Heart left ventricle (tissue), 16 donors: ENCODE measurements at regions of chr7 and their contacts with region 1.

Region 1: DNA sequence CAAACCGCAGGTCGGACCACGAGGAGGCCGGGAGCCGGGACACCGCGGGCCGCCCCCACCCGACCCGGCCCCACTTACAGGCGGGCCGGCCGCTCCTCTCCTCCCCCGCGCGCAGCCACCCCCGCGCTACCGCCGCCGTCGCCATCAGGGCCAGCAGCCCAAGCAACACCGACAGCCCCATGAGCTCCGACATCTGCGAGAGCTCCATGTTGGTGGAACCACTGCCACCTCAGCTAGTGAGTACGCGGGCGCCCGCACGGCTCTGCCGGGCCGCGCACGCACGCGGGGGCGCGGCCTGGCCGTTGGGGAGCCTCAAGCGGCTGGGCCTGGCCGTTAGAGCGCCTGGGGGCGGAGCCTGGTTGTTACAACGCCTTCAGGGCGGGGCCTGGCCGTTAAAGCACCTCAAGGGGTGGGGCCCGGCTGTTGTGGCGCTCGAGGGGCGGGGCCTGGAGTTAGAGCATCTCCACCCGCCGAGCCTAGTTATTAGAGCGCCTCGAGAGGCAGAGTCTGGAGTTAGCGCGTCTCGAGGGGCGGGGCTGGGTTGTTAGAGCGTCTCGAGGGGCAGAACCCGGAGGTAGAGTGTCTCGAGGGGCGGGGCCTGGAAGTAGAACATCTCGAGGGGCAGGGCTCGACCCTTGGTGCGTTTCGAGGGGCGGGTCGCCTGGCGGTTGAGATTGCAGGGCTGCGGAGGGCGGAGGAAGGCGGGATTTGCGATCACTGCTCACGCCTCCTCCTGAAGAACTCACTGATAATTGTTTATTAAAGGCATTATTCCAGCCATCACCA is at the start of gene TBL2:
- DNase-seq: peak; percentile 98 to 99 (median 99)
- ATAC-seq: peak; percentile 97 to 99 (median 98)
- H3K4me3 ChIP-seq: peak within 1 kb of the TSS; percentile 42 to 98 (median 95)
- H3K27ac ChIP-seq: peak within 1 kb of the TSS; percentile 58 to 96 (median 86)
- H3K4me1 ChIP-seq: peaks cover 0 to 59% (median 17%) of the 10 kb centered on the region in 12 donors
- H3K27me3 ChIP-seq: no peaks in the 10 kb centered on the region
- CTCF ChIP-seq: peak in 4 of 12 donors; percentile 29 to 50 (median 38)
- POLR2A ChIP-seq: peak in 1 of 2 donors; percentile 91
- total RNA-seq, gene TBL2: 6.8 to 24.1 (median 14.1) TPM

Region 2: DNA sequence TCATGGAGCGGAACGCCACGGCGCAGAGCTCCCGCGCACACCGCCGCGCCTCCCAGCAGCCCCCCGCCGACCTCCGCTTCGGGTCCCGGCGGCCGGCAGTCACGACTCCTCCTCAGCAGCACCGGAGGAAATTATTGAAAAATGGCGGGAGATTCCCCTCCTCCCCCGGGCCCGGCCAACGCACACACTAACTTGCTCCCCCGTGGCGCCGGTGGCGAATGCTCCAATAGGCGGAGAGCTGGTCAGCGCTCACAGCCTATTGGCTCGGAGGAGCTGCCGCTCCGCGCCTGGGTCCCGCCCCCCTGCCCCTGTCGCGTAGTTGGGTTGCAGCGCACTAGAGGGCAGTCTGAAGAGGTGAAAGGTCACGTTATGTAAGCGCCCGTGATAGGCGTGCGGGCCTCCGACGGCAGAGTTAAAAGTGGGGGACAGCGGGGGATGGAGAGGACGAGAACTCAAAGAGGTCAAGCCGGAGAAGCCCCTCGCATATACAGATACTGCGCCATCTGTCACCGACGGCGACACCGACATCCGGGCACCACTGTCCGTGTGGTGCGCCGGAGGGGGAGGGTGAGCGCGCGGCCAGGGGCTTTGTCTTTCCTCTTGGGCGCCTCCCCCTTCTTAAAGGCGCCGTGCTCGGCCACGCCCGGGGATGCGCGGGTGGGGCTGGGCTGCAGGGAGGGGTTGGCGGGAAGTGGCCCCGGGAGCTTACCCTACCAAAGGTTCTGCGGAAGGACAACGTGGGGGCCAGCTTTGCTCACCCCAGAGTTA is 56.2 kb before region 1 on chr7 and contains the start of gene BAZ1B:
- intact Hi-C with region 1: loop called in 2 of 10 experiments (anchors 1 to 10 kb)
- DNase-seq: peak; percentile 99
- ATAC-seq: peak; percentile 98 to 99 (median 98)
- H3K4me3 ChIP-seq: peak within 1 kb of the TSS; percentile 59 to 99 (median 90)
- H3K27ac ChIP-seq: peak within 1 kb of the TSS; percentile 81 to 97 (median 94)
- H3K4me1 ChIP-seq: peaks cover 11 to 64% (median 36%) of the 10 kb centered on the region in 12 donors
- H3K27me3 ChIP-seq: no peaks in the 10 kb centered on the region
- CTCF ChIP-seq: peak in 7 of 12 donors; percentile 6 to 47 (median 20)
- POLR2A ChIP-seq: peak; percentile 32 to 75
- total RNA-seq, gene BAZ1B: 30.1 to 45.0 (median 41.5) TPM

Region 3: GRCh38 chr7:73544678-73545077 is 33.9 kb before region 1 on chr7:
- intact Hi-C with region 1: loop called in 1 of 10 experiments (anchors 1 kb)
- DNase-seq: no peak
- ATAC-seq: no peak
- H3K4me3 ChIP-seq: no peak overlapping the region
- H3K27ac ChIP-seq: no peak overlapping the region
- H3K4me1 ChIP-seq: peaks cover 0 to 25% (median 6%) of the 10 kb centered on the region in 12 donors
- H3K27me3 ChIP-seq: no peaks in the 10 kb centered on the region
- CTCF ChIP-seq: no peak
- POLR2A ChIP-seq: no peak

Region 4: GRCh38 chr7:73557108-73557396 is 21.5 kb before region 1 on chr7:
- intact Hi-C with region 1: loop called in 3 of 10 experiments (anchors 1 to 2 kb)
- DNase-seq: peak; percentile 95 to 97 (median 96)
- ATAC-seq: peak; percentile 90 to 97 (median 96)
- H3K4me3 ChIP-seq: peak overlapping the region; percentile 31 to 96 (median 83)
- H3K27ac ChIP-seq: peak overlapping the region; percentile 96 to 100 (median 99)
- H3K4me1 ChIP-seq: peaks cover 0 to 37% (median 21%) of the 10 kb centered on the region in 12 donors
- H3K27me3 ChIP-seq: no peaks in the 10 kb centered on the region
- CTCF ChIP-seq: no peak
- POLR2A ChIP-seq: peak in 1 of 2 donors; percentile 44